H1 (cell line): ENCODE measurements at regions of chr12 and their contacts with region 1.

Region 1: GRCh38 chr12:57693659-57694458 is at the start of gene OS9:
- DNase-seq: peak; percentile 85 to 97
- H3K4me3 ChIP-seq: peak within 1 kb of the TSS; percentile 66 to 99 (median 91)
- H3K27ac ChIP-seq: peak within 1 kb of the TSS; percentile 64; the same call in 1 of the 2 replicates
- H3K4me1 ChIP-seq: peaks cover 0 to 5% (median 1%) of the 10 kb centered on the region in 4 experiments; a peak in 1 of 7 replicates
- H3K27me3 ChIP-seq: no peaks in the 10 kb centered on the region
- CTCF ChIP-seq: peak; percentile 72 to 82 (median 78)
- EP300 ChIP-seq: no peak
- POLR2A ChIP-seq: peak; percentile 80 to 94
- RAD21 ChIP-seq: peak; percentile 51 to 52
- total RNA-seq, gene OS9: 71.0 and 74.3 TPM in 2 replicates

Region 2: DNA sequence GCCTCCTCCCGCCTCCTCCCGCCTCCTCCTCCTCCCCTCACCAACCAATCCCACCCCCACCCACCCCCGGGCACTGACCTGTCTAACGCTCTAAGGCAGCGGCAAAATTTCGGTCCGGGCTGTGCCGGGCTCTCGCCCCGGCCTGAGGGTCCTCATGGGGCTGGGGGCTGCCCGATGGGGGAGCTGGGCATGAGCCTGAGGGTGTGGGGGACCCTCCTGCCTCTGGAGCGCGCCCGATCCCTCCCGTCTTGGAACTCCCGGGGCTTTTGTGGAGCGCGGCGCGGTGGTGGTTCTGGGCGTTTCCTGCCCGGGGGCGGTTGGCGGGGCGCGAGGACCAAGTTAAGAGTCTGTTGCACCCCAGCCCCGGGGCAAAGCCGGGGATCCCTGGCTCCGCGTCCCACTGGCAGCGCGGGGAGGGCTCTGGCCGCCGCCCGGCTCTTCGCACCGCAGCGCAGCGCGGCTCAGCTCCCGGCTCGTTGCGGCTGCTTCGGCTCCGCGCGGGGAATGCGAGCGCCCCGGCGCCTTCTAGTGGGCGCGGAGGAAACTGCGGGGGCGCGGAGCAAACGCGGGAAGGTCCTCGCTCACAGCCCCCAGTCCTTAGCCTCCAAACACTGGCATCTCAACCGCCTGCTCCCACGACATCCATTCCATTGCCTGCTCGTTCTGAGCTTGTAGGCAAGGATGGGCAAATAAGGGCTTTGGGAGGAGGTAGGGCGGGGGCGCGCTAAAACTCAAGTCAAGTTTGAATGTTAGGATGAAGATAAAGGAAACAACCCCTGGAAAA is 61.0 kb before region 1 on chr12 and contains the start of gene B4GALNT1:
- CTCF ChIA-PET with region 1: interaction called, 15 read pairs
- POLR2A ChIA-PET with region 1: no interaction called
- DNase-seq: peak in 1 of 2 experiments; percentile 85
- H3K4me3 ChIP-seq: peak within 1 kb of the TSS; percentile 43 to 83 (median 54)
- H3K27ac ChIP-seq: no peak within 1 kb of the TSS
- H3K4me1 ChIP-seq: peaks cover 0 to 13% (median 9%) of the 10 kb centered on the region in 4 experiments; a peak in 6 of 7 replicates
- H3K27me3 ChIP-seq: peaks cover 49 to 68% (median 63%) of the 10 kb centered on the region in 4 experiments
- CTCF ChIP-seq: peak in 2 of 3 experiments; percentile 84 to 90; a peak in 3 of 4 replicates
- EP300 ChIP-seq: no peak
- POLR2A ChIP-seq: no peak
- RAD21 ChIP-seq: peak; percentile 44 to 58; a peak in 3 of 4 replicates
- total RNA-seq, gene B4GALNT1: 1.4 and 1.5 TPM in 2 replicates

Region 3: DNA sequence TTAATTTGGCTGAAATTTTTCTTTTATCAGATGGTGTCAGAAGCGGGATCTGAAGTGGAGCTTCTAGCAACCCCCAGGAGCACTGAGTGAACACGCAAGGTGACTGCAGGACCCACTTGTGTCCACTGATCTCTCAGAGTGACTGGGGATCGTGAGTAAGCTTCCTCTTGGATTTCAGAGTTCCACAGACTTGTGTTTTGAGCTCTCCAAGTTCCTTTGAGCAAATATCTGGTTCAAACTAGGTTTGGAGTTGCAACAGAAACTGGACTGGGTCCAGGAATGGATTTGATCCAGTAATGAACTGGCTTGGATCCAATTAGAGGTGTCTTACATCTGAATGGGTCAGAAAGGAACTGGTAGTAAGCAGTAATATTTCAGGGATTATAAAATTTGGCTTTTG is 36.1 kb before region 1 on chr12:
- CTCF ChIA-PET with region 1: interaction called, 11 read pairs
- POLR2A ChIA-PET with region 1: no interaction called
- DNase-seq: no peak
- H3K4me3 ChIP-seq: no peak overlapping the region
- H3K27ac ChIP-seq: no peak overlapping the region
- H3K4me1 ChIP-seq: no peaks in the 10 kb centered on the region
- H3K27me3 ChIP-seq: no peaks in the 10 kb centered on the region
- CTCF ChIP-seq: no peak
- EP300 ChIP-seq: no peak
- POLR2A ChIP-seq: no peak
- RAD21 ChIP-seq: no peak

Region 4: GRCh38 chr12:57726151-57726883 is 32.5 kb after region 1 on chr12:
- CTCF ChIA-PET with region 1: interaction called, 19 read pairs
- POLR2A ChIA-PET with region 1: interaction called, 3 read pairs
- DNase-seq: peak; percentile 65 to 95
- H3K4me3 ChIP-seq: peak overlapping the region; percentile 51 to 82 (median 65)
- H3K27ac ChIP-seq: no peak overlapping the region
- H3K4me1 ChIP-seq: peaks cover 0 to 20% (median 13%) of the 10 kb centered on the region in 4 experiments; a peak in 5 of 7 replicates
- H3K27me3 ChIP-seq: peaks cover 19 to 70% (median 50%) of the 10 kb centered on the region in 4 experiments
- CTCF ChIP-seq: peak; percentile 70 to 85 (median 81)
- EP300 ChIP-seq: no peak
- POLR2A ChIP-seq: no peak
- RAD21 ChIP-seq: peak; percentile 43 to 63; a peak in 3 of 4 replicates